GM18951 (cell line): ENCODE measurements at regions of chr11 and their contacts with region 1.

Region 1: DNA sequence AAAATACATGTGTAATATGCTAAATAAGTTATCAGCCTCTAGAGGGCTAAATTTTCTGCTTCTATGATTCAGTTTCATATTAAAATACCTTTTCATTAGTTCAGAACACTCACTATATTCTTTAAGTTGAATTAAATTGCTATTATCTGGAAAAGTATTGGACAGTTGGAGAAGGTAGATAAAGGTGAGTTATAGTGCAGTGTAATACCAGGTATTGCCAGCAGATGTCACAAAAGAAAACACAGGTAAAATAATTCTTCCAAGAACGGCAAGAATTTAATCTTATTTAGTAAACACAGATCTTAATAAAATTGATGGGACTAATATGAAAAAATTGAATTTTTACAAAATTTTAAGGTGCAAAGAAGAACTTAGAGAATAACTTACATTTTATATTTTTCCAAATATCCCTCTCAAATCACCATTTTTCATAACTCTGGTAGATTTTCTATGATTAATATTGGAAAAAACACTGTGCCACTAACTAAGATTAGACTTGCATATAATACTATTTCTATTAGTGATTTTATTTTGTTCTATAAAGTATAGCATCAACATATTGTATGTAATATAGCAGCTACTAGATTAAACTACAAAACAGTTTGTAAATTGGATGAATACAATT is 1.7 kb upstream of the LRRC4C start:
- POLR2A ChIP-seq: no peak

Region 2: DNA sequence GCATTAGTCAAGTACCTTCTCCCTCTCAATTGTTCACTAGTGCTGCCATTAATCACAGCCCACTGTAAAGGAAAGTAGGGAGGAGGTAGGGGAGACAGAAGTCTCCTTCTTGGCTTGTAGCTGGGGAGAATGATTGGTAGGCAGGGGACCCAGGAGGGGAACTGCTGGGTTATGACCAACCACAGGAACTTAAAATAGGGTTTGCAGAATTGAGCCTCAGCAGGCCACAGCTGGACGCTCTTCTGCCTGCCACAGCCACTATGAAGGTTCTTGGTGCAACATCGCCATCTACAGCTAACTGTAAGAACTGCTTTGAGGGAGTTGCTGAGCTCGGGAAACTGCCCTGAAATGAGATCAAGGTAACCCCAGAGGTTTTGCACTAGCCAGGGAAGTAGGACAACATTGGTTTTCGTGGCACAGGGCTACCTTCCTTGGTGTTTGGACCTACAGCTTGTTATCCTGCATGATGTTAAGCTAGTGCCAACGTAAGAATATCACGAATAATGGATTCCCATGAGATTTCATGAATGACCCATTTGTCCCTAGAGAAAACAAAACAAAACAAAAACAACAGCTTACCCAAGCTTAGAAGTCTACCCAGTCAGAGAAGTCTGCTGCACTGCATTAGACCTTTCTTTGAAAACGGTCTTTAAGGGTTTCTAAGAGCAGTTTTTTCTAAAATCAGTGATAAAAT is 1063.5 kb after region 1 on chr11:
- in situ Hi-C with region 1: loop called (anchors 25 kb)
- POLR2A ChIP-seq: no peak

Region 3: GRCh38 chr11:43282607-43283440 is 1821.7 kb after region 1 on chr11:
- in situ Hi-C with region 1: loop called (anchors 25 kb)
- POLR2A ChIP-seq: no peak